Motor neuron (in vitro differentiated cells): ENCODE measurements at regions of chr5 and their contacts with region 1.

Region 1: DNA sequence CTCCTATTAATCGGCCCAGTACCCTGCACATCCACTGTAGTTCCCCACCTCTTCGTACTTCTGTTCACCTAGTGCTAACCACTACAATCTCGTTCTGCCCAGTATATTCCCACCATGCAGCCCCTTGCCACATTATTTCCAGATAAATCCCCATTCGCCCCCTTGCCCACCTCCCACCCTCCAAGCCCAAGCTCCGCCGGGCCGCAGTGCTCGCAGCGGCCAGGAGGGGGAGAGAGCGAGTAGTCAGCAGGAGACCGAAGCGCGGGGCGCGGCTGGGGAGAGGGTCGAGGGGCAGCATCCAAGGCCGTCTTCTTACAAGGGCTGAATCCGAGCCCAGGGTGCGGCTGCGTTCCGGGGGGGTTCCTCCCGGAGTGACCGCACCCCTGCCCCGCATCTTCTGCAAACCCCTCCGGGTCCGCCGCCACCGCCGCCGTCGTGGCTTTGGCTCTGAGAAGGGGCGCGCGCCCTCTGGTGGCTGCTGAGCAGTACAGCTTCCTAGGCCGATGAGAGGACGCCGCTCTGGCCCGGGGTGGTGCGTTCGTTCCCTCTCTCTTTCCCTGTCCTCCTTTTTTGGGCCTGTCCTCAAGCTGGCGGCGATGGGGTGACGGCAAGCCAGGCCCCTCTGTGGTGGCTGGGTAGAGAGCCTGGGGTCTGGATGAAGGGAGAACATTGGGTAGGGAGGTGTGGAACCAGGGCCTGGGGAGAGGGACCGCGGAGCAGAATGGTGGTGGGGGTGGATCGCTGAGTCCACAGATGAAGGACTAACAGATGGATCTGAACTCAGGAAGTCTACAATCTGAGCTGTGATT is 30.0 kb upstream of the PSD2 start:
- ATAC-seq: peak; percentile 60 to 96 (median 69)
- H3K4me3 ChIP-seq: peak overlapping the region; percentile 40 to 70 (median 59)
- H3K27ac ChIP-seq: peak overlapping the region; percentile 32 to 51
- H3K4me1 ChIP-seq: peaks cover 42 to 44% of the 10 kb centered on the region in 2 donors

Region 2: GRCh38 chr5:139422307-139422893 is 343.2 kb before region 1 on chr5:
- in situ Hi-C with region 1: loop called in 2 of 9 experiments (anchors 10 to 25 kb)
- ATAC-seq: peak; percentile 60 to 94 (median 78)
- H3K4me3 ChIP-seq: no peak overlapping the region
- H3K27ac ChIP-seq: no peak overlapping the region
- H3K4me1 ChIP-seq: peaks cover 0 to 5% of the 10 kb centered on the region in 2 donors

Region 3: GRCh38 chr5:139439013-139439903 is 326.4 kb before region 1 on chr5 and contains the start of gene DNAJC18:
- in situ Hi-C with region 1: loop called in 1 of 9 experiments (anchors 25 kb)
- ATAC-seq: peak; percentile 95 to 99 (median 98)
- H3K4me3 ChIP-seq: peak within 1 kb of the TSS; percentile 75 to 98 (median 95)
- H3K27ac ChIP-seq: peak within 1 kb of the TSS; percentile 83 to 90
- H3K4me1 ChIP-seq: peaks cover 15 to 17% of the 10 kb centered on the region in 2 donors
- total RNA-seq, gene DNAJC18: 4.6 to 26.3 (median 20.5) TPM

Region 4: GRCh38 chr5:139560752-139561654 is 204.6 kb before region 1 on chr5 and contains the start of gene UBE2D2:
- in situ Hi-C with region 1: no loop called
- ATAC-seq: peak; percentile 84 to 96 (median 94)
- H3K4me3 ChIP-seq: peak within 1 kb of the TSS; percentile 50 to 91 (median 71)
- H3K27ac ChIP-seq: peak within 1 kb of the TSS; percentile 98 to 99
- H3K4me1 ChIP-seq: peaks cover 19 to 29% of the 10 kb centered on the region in 2 donors
- total RNA-seq, gene UBE2D2: 66.9 to 164 (median 102) TPM

Region 5: GRCh38 chr5:139633295-139634027 is 132.2 kb before region 1 on chr5:
- in situ Hi-C with region 1: loop called in 4 of 9 experiments (anchors 5 to 25 kb)
- ATAC-seq: peak; percentile 1 to 34 (median 14)
- H3K4me3 ChIP-seq: no peak overlapping the region
- H3K27ac ChIP-seq: no peak overlapping the region
- H3K4me1 ChIP-seq: peaks cover 37 to 47% of the 10 kb centered on the region in 2 donors

Region 6: GRCh38 chr5:139651853-139652787 is 113.5 kb before region 1 on chr5:
- in situ Hi-C with region 1: loop called in 8 of 9 experiments (anchors 10 to 25 kb)
- ATAC-seq: peak; percentile 6 to 54 (median 30)
- H3K4me3 ChIP-seq: peak overlapping the region; percentile 52 to 97 (median 96)
- H3K27ac ChIP-seq: peak overlapping the region; percentile 87 to 95
- H3K4me1 ChIP-seq: peaks cover 49 to 59% of the 10 kb centered on the region in 2 donors

Region 7: GRCh38 chr5:140639148-140639979 is 873.8 kb after region 1 on chr5 and contains the start of gene TMCO6:
- in situ Hi-C with region 1: no loop called
- ATAC-seq: peak; percentile 87 to 98 (median 96)
- H3K4me3 ChIP-seq: peak within 1 kb of the TSS; percentile 42 to 75 (median 54)
- H3K27ac ChIP-seq: peak within 1 kb of the TSS; percentile 59 to 75
- H3K4me1 ChIP-seq: peaks cover 8 to 10% of the 10 kb centered on the region in 2 donors
- total RNA-seq, gene TMCO6: 7.9 to 25.6 (median 11.9) TPM